Lower leg skin (tissue), 4 donors: ENCODE measurements at regions of chr19 and their contacts with region 1.

Region 1: GRCh38 chr19:16091519-16091918 is 15.2 kb downstream of the TPM4 start:
- DNase-seq: no peak
- H3K4me3 ChIP-seq: no peak overlapping the region
- CTCF ChIP-seq: no peak
- POLR2A ChIP-seq: no peak

Region 2: GRCh38 chr19:16041299-16041990 is 50.1 kb before region 1 on chr19:
- intact Hi-C with region 1: no loop called
- DNase-seq: peak; percentile 76 to 97
- H3K4me3 ChIP-seq: no peak overlapping the region
- CTCF ChIP-seq: peak in 1 of 3 donors; percentile 86
- POLR2A ChIP-seq: no peak

Region 3: GRCh38 chr19:16111160-16111908 is 19.8 kb after region 1 on chr19 and contains the start of gene RAB8A:
- intact Hi-C with region 1: loop called (anchors 2 kb)
- DNase-seq: peak; percentile 98 to 100
- H3K4me3 ChIP-seq: peak within 1 kb of the TSS; percentile 99
- CTCF ChIP-seq: peak in 1 of 3 donors; percentile 95
- POLR2A ChIP-seq: no peak
- total RNA-seq, gene RAB8A: 43.3 to 58.2 (median 50.8) TPM